Posterior cingulate gyrus (tissue), 11 donors: ENCODE measurements at regions of chr7 and their contacts with region 1.

Region 1: GRCh38 chr7:87506246-87507180 is 31.0 kb upstream of the ABCB4 start:
- DNase-seq: no peak

Region 2: DNA sequence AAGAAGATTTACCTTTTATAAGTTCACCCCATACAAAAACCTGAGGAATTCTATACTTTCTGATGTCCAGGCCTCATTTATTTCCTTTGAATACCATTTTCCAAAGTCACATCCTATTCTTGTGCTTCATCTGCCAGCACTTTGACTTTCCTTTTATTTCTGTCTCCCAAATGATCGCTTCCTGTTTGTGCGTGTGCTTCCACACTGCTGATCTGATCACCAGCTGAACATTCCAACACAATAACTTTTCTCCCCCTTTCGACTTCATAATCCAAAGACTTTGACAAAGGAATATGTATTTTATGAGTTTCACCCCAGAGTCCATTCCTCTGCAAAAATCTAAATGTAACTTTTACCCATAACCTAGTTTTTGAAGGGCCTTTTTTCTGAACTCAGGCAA is 450.2 kb before region 1 on chr7:
- intact Hi-C with region 1: no loop called
- DNase-seq: no peak

Region 3: GRCh38 chr7:87391020-87391701 is 115.4 kb before region 1 on chr7:
- intact Hi-C with region 1: no loop called
- DNase-seq: no peak

Region 4: DNA sequence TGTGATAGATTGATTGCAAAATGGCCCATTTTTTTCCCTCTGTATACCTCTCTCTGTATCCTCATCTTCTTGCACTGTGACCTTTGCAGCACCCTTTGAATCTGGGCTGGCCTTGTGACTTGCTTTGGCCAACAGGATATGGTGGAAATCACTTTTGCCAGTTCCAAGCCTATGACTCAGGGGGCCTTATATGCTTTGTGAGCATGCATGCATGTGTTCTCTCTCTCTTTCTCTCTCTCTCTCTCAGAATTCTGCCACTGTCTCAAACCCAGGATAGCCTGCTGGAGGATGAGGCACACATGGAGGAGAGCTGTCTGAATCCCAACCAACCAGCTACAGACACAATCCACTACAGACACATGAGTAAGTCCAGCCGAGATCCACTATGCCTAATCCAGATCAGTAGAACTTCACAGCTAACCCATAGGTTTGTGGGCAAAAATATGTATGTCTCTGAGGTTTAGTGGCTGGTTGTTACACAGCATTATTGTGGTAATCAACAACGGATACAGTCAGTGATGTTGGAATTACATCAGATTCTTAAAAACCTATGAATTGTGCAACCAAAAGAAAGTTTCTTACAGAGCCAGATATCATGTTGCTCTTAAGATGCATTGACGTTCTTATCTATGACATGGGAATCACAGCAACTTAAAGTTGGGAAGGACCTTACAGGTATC is 10.8 kb after region 1 on chr7:
- intact Hi-C with region 1: no loop called
- DNase-seq: no peak

Region 5: DNA sequence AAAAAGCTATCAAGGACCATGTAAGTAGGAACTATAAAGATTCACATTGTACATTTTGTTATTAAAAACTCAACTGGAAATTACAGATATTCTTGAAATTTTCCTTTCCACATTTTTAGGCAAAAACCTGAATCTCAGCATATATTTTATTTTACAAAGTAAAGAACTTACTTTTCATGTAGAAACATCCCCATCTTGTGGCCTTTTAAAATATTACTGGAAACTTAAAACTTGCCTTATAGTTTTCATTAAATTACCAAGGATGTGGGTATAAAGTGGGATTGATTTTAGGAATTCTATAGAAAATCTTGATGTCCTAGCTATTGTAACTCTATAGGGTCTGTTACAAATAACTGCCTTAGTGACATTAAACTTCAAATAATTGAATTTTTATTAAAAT is 380.4 kb after region 1 on chr7:
- intact Hi-C with region 1: loop called (anchors 2 kb)
- DNase-seq: no peak

Region 6: GRCh38 chr7:88169717-88170320 is 663.3 kb after region 1 on chr7:
- intact Hi-C with region 1: loop called (anchors 5 kb)
- DNase-seq: no peak